Ascending aorta (tissue), 2 donors: ENCODE measurements at regions of chr19 and their contacts with region 1.

Region 1: GRCh38 chr19:46860125-46860845 is 512 bp upstream of the ARHGAP35 start:
- DNase-seq: peak; percentile 94 to 99
- H3K4me3 ChIP-seq: peak overlapping the region; percentile 85 to 87
- H3K27ac ChIP-seq: peak overlapping the region; percentile 97 to 100
- H3K4me1 ChIP-seq: peaks cover 12 to 32% of the 10 kb centered on the region in 2 donors
- H3K27me3 ChIP-seq: no peaks in the 10 kb centered on the region
- CTCF ChIP-seq: no peak

Region 2: DNA sequence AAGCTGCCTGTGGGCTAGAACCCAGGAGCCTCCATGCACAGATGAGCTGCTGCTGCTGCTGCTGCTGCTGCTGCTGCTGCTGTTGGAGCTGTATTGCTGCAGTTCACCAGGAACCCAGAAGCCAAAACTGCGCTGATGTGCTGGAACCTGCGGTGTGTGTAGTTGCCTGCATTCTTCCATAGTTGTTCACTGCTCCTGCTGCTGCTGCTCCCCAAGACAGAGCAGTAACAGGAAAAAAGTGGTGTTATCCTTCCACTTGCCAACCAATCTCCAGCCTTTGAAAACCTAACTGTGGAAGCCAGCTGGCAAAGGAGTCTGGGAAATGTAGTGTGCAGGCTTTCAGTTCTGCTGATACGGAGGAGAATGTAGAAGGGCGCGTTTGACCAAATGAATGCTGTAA is 38.4 kb after region 1 on chr19:
- intact Hi-C with region 1: loop called (anchors 2 kb)
- DNase-seq: peak in 1 of 2 donors; percentile 74
- H3K4me3 ChIP-seq: peak overlapping the region in 1 of 2 donors; percentile 11
- H3K27ac ChIP-seq: no peak overlapping the region
- H3K4me1 ChIP-seq: peaks cover 0 to 28% of the 10 kb centered on the region in 2 donors
- H3K27me3 ChIP-seq: no peaks in the 10 kb centered on the region
- CTCF ChIP-seq: no peak

Region 3: DNA sequence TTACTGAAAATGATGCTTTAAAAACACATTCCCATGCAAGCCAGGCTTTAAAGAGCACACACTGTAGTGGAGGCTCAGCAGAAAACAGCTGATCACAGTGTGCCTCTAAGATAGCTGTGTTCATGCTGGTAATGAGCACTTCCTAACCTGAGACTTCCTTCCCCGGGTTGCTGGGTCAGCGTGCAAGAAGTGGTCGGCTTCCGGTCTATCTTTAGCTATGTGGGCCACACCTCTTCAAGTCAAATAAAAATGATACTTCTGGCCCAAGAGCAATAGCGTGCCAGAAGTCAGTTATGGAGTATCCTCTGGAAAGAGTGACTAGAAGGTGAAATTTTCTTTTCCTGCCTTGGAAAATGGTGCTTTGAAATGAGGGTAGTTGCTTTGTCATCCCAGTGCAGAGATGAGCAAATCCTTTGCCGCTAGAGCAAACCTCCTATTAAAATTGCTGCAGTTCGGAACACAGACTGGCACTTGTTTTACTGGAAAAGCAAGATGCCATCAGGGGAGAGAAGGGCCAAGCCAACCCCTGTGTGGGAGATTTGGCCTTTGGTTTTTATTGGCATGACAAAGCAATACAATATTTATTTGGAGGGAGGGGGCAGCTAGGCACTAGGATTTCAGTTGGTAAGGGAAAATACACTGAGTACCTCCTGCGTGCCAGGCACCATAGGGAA is 64.7 kb after region 1 on chr19:
- intact Hi-C with region 1: loop called (anchors 5 kb)
- DNase-seq: peak in 1 of 2 donors; percentile 63
- H3K4me3 ChIP-seq: no peak overlapping the region
- H3K27ac ChIP-seq: peak overlapping the region; percentile 42 to 60
- H3K4me1 ChIP-seq: peaks cover 19 to 49% of the 10 kb centered on the region in 2 donors
- H3K27me3 ChIP-seq: no peaks in the 10 kb centered on the region
- CTCF ChIP-seq: no peak

Region 4: GRCh38 chr19:46990991-46991676 is 130.8 kb after region 1 on chr19:
- intact Hi-C with region 1: loop called (anchors 1 kb)
- DNase-seq: peak; percentile 47 to 91
- H3K4me3 ChIP-seq: no peak overlapping the region
- H3K27ac ChIP-seq: peak overlapping the region; percentile 60 to 73
- H3K4me1 ChIP-seq: peaks cover 2 to 7% of the 10 kb centered on the region in 2 donors
- H3K27me3 ChIP-seq: no peaks in the 10 kb centered on the region
- CTCF ChIP-seq: peak; percentile 80 to 91 (median 82)

Region 5: GRCh38 chr19:47112997-47113849 is 252.9 kb after region 1 on chr19 and contains the start of gene ZC3H4:
- intact Hi-C with region 1: loop called (anchors 1 kb)
- DNase-seq: peak; percentile 98 to 99
- H3K4me3 ChIP-seq: peak within 1 kb of the TSS; percentile 87 to 97
- H3K27ac ChIP-seq: peak within 1 kb of the TSS; percentile 100
- H3K4me1 ChIP-seq: peaks cover 0 to 12% of the 10 kb centered on the region in 2 donors
- H3K27me3 ChIP-seq: no peaks in the 10 kb centered on the region
- CTCF ChIP-seq: no peak
- total RNA-seq, gene ZC3H4: 24.6 TPM